PC-9 (cell line): ENCODE measurements at regions of chr4 and their contacts with region 1.

Region 1: DNA sequence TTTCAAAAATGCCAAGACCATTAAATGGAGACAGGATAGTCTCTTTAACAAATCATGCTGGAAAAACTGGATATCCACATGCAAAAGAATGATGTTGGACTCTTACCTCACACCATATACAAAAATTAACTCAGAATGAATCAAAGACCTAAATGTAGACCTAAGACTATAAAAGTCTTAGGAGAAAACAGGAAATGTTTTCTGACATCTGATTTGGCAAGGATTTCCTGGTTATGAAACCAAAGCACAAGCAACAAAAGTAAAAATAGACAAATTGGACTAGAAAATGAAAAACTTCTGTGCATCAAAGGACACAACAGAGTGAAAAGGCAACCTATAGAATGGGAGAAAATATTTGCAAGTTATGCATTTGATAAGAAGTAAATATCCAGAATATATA is 37.6 kb downstream of the ARFIP1 start:
- DNase-seq: no peak
- H3K4me3 ChIP-seq: no peak overlapping the region
- H3K27ac ChIP-seq: no peak overlapping the region
- H3K4me1 ChIP-seq: no peaks in the 10 kb centered on the region
- H3K27me3 ChIP-seq: no peaks in the 10 kb centered on the region
- CTCF ChIP-seq: no peak

Region 2: GRCh38 chr4:152927737-152928136 is 110.4 kb after region 1 on chr4:
- CTCF ChIA-PET with region 1: no interaction called
- POLR2A ChIA-PET with region 1: no interaction called
- intact Hi-C with region 1: no loop called
- DNase-seq: no peak
- H3K4me3 ChIP-seq: no peak overlapping the region
- H3K27ac ChIP-seq: no peak overlapping the region
- H3K4me1 ChIP-seq: peaks cover 4% of the 10 kb centered on the region; the same call in 1 of the 2 replicates
- H3K27me3 ChIP-seq: no peaks in the 10 kb centered on the region
- CTCF ChIP-seq: no peak

Region 3: DNA sequence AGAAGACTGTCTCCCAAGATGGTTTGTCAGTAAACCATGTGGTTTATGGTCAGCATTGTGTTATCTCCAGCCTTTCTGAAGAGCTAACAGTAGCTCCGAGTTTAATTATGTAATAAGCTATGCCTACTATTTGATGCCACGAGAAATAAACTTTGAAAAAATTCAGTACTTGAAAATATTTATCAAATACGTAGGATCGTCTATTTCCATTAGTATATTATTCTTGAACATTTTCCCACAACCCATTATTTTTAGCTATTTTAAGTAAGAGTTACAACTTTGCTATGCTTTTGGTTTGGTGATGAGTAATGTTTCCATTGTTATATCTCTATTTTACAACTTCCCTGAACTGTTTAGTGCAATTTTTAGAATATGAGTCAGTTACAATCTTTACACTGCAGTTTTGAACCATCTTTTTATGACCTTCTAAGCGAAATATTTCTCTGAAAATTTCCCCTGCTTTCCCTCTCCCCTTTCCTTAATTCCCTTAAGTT is 342.4 kb after region 1 on chr4:
- CTCF ChIA-PET with region 1: no interaction called
- POLR2A ChIA-PET with region 1: interaction called, 12 read pairs
- intact Hi-C with region 1: no loop called
- DNase-seq: no peak
- H3K4me3 ChIP-seq: no peak overlapping the region
- H3K27ac ChIP-seq: no peak overlapping the region
- H3K4me1 ChIP-seq: 0 out of 2 replicates have a peak, but pooled peaks cover 8% of the 10 kb centered on the region
- H3K27me3 ChIP-seq: no peaks in the 10 kb centered on the region
- CTCF ChIP-seq: no peak